Gastrocnemius medialis (tissue), 4 donors: ENCODE measurements at regions of chr7 and their contacts with region 1.

Region 1: DNA sequence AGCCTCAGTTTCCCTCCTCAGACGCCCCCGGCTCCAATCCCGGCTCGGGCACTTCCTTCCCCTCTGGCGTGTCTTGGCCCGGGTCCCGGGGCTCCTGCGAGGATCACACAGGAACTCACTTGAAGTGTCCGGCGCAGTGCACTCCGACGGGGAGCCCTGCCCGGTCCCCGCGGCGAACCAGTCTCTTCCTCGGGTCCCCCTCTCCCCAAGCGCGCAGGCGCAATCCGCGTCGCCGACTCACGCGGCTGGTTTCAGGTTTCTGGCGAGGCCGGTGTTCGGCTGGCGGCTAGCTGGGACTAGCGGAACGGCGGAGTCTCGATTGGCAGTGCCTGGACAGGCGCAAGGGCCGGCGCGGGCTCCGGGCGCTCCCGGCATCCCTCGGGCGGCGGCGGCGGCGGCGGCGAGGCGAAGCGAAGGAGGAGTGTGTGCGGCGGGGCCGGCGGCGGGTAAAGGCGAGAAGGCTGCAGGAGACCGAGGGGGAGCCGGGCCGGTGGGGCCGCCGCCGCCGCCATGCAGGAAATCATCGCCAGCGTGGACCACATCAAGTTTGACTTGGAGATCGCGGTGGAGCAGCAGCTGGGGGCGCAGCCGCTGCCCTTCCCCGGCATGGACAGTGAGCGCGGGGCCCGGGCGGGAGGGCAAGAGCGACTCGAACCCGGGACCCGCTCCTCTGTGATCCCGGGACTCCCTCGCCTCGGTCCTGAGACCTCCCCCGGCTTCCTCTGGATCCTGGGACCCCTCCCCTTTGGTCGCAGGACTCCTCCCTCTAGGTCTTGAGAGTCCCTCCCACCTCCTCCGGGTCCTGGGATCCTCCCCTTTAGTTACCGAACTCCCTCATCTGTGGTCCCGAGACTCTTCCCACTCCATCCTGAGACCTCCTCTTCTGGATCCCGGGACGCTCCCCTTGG is at the starts of genes CPSF4 and PTCD1:
- DNase-seq: peak; percentile 95 to 96
- ATAC-seq: peak; percentile 94 to 97
- H3K4me3 ChIP-seq: peak within 1 kb of the TSS; percentile 83 to 99 (median 96)
- H3K27ac ChIP-seq: peak within 1 kb of the TSS; percentile 92 to 98 (median 96)
- H3K4me1 ChIP-seq: peaks cover 28 to 37% of the 10 kb centered on the region in 2 donors
- H3K27me3 ChIP-seq: no peaks in the 10 kb centered on the region
- CTCF ChIP-seq: no peak
- POLR2A ChIP-seq: peak; percentile 78 to 85
- total RNA-seq, gene CPSF4: 21.4 to 40.4 (median 26.1) TPM
- total RNA-seq, gene PTCD1: 7.8 to 14.1 (median 10.9) TPM

Region 2: DNA sequence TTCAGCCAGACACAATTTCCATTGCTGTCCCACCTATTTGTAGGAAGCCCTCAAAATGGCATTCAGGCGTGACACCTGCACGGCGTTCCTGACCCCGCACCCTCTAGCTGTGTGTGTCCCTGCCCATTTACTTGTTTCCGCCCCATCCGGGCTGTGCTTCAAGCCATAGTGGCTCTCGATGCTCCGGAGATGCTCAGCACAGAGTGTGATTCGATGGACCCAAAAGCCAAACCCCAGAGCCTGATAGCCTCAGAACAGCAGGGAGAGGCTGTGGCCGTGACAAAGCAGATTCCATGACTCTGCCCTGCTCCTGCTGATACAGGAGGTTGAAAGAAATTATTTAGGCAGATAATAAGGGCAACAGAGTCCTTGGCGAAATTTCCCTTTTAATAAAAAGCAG is 16.6 kb before region 1 on chr7:
- in situ Hi-C with region 1: no loop called
- intact Hi-C with region 1: no loop called
- DNase-seq: no peak
- ATAC-seq: no peak
- H3K4me3 ChIP-seq: no peak overlapping the region
- H3K27ac ChIP-seq: no peak overlapping the region
- H3K4me1 ChIP-seq: no peaks in the 10 kb centered on the region
- H3K27me3 ChIP-seq: no peaks in the 10 kb centered on the region
- CTCF ChIP-seq: no peak
- POLR2A ChIP-seq: no peak

Region 3: GRCh38 chr7:99459087-99459486 is 20.3 kb after region 1 on chr7:
- in situ Hi-C with region 1: no loop called
- intact Hi-C with region 1: no loop called
- DNase-seq: no peak
- ATAC-seq: no peak
- H3K4me3 ChIP-seq: no peak overlapping the region
- H3K27ac ChIP-seq: no peak overlapping the region
- H3K4me1 ChIP-seq: peaks cover 21 to 28% of the 10 kb centered on the region in 2 donors
- H3K27me3 ChIP-seq: no peaks in the 10 kb centered on the region
- CTCF ChIP-seq: peak in 1 of 5 experiments; percentile 26
- POLR2A ChIP-seq: no peak

Region 4: DNA sequence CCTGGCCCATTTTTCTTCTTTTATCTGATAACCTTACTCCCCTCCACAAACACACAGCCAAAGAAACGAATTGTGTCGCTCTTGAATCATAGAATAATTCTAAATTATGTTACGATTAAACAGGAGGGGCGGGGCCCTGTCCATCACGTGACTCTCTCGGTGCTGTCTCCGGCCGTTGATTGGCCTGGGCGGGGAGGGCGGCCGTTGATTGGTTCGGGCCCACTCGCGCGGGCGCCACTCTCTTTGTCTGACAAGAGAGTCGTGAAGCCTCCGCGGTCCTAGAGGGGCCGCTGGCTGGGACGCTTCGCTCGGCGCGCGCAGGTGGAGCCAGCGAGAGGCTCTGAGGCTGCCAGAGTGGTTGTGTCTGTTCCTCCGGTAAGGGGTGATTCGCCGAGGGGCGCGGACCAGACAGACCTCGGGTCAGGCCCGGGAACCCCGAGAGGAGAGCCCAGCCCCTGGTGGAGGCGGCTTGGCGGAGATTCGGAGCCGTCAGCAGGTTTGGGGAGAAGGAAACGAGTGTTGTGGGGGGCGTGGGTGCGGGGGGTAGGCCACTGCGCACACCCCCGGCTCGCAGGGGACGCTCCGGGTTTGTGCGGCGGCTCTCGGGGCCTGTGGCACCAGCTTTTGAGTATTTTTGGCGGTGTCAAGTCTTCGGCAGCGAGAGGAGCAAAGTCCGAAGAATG is 33.9 kb after region 1 on chr7 and contains the start of gene ZNF789:
- in situ Hi-C with region 1: no loop called
- intact Hi-C with region 1: loop called (anchors 2 kb)
- DNase-seq: peak; percentile 96 to 97
- ATAC-seq: peak; percentile 92 to 94
- H3K4me3 ChIP-seq: peak within 1 kb of the TSS; percentile 70 to 90 (median 88)
- H3K27ac ChIP-seq: peak within 1 kb of the TSS; percentile 80 to 95 (median 89)
- H3K4me1 ChIP-seq: peaks cover 9 to 14% of the 10 kb centered on the region in 2 donors
- H3K27me3 ChIP-seq: no peaks in the 10 kb centered on the region
- CTCF ChIP-seq: peak in 1 of 5 experiments; percentile 11
- POLR2A ChIP-seq: peak; percentile 33 to 55
- total RNA-seq, gene ZNF789: 1.2 to 2.8 (median 1.4) TPM